Ascending aorta (tissue), 2 donors: ENCODE measurements at regions of chr3 and their contacts with region 1.

Region 1: DNA sequence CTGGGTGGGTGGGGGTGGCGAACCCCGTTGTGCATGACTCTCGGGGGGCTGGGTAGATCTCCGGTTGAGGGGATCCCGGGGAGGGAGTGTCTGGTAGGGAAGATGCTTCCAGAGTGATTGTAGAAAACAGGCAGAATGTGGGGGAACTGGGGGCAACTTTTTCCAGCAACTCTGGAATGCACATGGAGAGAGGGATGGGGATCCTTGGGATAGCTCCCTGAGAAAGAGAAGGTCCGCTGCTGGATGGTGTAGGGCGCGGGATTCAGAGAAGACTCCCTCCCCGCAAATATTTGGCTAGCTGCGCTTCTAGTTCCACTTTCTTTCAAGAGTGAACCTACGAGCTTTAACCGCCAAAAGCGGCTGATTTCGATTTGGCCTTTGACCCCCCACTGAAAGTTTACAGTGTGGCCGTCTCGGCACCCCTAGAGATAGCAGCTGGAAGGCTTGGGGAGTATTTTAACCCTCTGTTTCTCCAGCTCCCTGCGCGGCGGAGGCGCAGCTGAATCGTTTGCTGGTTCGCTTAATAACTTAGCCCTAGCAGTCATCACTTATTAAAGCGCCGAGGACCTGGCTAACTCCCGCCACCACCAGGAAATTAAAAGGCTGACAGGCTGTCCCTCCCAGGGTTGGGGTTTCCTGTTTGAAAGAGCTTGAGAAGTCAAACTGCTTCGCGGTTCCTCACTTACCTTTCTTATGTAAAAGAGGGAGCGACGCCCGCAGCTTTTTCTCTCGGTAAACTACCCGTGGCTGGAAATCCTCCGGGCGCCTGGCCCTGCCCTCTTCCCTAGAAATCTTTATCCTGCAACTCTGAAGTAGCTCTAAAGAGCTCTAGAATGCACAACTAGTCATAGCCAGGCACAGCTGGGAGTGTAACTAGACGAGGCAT is 1.2 kb downstream of the PHLDB2 start:
- DNase-seq: peak; percentile 45 to 92
- H3K4me3 ChIP-seq: peak overlapping the region; percentile 89 to 93
- H3K27ac ChIP-seq: peak overlapping the region; percentile 97
- H3K4me1 ChIP-seq: peaks cover 3 to 20% of the 10 kb centered on the region in 2 donors
- H3K27me3 ChIP-seq: no peaks in the 10 kb centered on the region
- CTCF ChIP-seq: peak; percentile 49 to 73 (median 66)

Region 2: GRCh38 chr3:111717601-111718000 is 142.6 kb before region 1 on chr3:
- intact Hi-C with region 1: loop called (anchors 1 kb)
- DNase-seq: peak in 1 of 2 donors; percentile 92
- H3K4me3 ChIP-seq: no peak overlapping the region
- H3K27ac ChIP-seq: no peak overlapping the region
- H3K4me1 ChIP-seq: peaks cover 3% of the 10 kb centered on the region in 2 donors
- H3K27me3 ChIP-seq: no peaks in the 10 kb centered on the region
- CTCF ChIP-seq: peak; percentile 89 to 95 (median 92)

Region 3: GRCh38 chr3:111761309-111761831 is 98.8 kb before region 1 on chr3:
- intact Hi-C with region 1: loop called (anchors 2 kb)
- DNase-seq: no peak
- H3K4me3 ChIP-seq: no peak overlapping the region
- H3K27ac ChIP-seq: peak overlapping the region; percentile 72 to 78
- H3K4me1 ChIP-seq: peaks cover 8 to 30% of the 10 kb centered on the region in 2 donors
- H3K27me3 ChIP-seq: no peaks in the 10 kb centered on the region
- CTCF ChIP-seq: no peak

Region 4: GRCh38 chr3:111904376-111905241 is 44.4 kb after region 1 on chr3:
- intact Hi-C with region 1: loop called (anchors 5 kb)
- DNase-seq: no peak
- H3K4me3 ChIP-seq: no peak overlapping the region
- H3K27ac ChIP-seq: peak overlapping the region in 1 of 2 donors; percentile 23
- H3K4me1 ChIP-seq: peaks cover 0 to 10% of the 10 kb centered on the region in 2 donors
- H3K27me3 ChIP-seq: no peaks in the 10 kb centered on the region
- CTCF ChIP-seq: peak in 1 of 3 experiments; percentile 4

Region 5: GRCh38 chr3:111967651-111968274 is 107.5 kb after region 1 on chr3:
- intact Hi-C with region 1: loop called (anchors 2 kb)
- DNase-seq: peak; percentile 41 to 94
- H3K4me3 ChIP-seq: no peak overlapping the region
- H3K27ac ChIP-seq: peak overlapping the region in 1 of 2 donors; percentile 37
- H3K4me1 ChIP-seq: peaks cover 0 to 6% of the 10 kb centered on the region in 2 donors
- H3K27me3 ChIP-seq: no peaks in the 10 kb centered on the region
- CTCF ChIP-seq: peak; percentile 77 to 88 (median 80)

Region 6: DNA sequence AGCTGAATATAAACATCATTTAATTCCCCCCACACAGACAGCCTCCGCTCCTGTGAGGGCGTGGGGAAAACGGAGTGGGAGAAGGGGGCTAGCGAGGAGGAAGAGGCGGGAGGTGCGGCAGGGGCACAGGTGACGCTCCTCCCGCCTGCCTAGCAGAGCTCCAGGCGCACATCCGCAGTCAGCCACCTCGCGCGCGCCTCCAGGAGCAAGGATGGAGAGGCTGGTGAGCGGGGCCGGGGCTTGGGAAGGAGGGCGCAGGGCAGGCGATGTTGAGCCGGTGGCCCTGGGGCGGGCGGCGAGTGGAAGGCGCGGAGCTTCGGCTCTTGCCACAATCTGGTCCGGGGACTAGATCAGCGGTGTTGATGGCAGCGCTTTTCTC is 472.8 kb after region 1 on chr3 and contains the start of gene CD200:
- intact Hi-C with region 1: loop called (anchors 10 kb)
- DNase-seq: peak in 1 of 2 donors; percentile 85
- H3K4me3 ChIP-seq: peak within 1 kb of the TSS; percentile 71 to 75
- H3K27ac ChIP-seq: peak within 1 kb of the TSS; percentile 95
- H3K4me1 ChIP-seq: peaks cover 0 to 4% of the 10 kb centered on the region in 2 donors
- H3K27me3 ChIP-seq: no peaks in the 10 kb centered on the region
- CTCF ChIP-seq: peak; percentile 11 to 26 (median 14)
- total RNA-seq, gene CD200: 3.6 TPM